A673 (cell line): ENCODE measurements at regions of chr1 and their contacts with region 1.

Region 1: GRCh38 chr1:39258146-39258924 is 53.8 kb downstream of the MACF1 start:
- DNase-seq: peak; percentile 79
- H3K4me3 ChIP-seq: no peak overlapping the region
- H3K27ac ChIP-seq: no peak overlapping the region
- H3K4me1 ChIP-seq: peaks cover 18% of the 10 kb centered on the region
- H3K27me3 ChIP-seq: no peaks in the 10 kb centered on the region
- CTCF ChIP-seq: peak; percentile 80

Region 2: GRCh38 chr1:39091845-39092645 is 166.3 kb before region 1 on chr1:
- CTCF ChIA-PET with region 1: no interaction called
- POLR2A ChIA-PET with region 1: no interaction called
- intact Hi-C with region 1: no loop called
- DNase-seq: no peak
- H3K4me3 ChIP-seq: no peak overlapping the region
- H3K27ac ChIP-seq: no peak overlapping the region
- H3K4me1 ChIP-seq: peaks cover 4% of the 10 kb centered on the region
- H3K27me3 ChIP-seq: no peaks in the 10 kb centered on the region
- CTCF ChIP-seq: no peak

Region 3: DNA sequence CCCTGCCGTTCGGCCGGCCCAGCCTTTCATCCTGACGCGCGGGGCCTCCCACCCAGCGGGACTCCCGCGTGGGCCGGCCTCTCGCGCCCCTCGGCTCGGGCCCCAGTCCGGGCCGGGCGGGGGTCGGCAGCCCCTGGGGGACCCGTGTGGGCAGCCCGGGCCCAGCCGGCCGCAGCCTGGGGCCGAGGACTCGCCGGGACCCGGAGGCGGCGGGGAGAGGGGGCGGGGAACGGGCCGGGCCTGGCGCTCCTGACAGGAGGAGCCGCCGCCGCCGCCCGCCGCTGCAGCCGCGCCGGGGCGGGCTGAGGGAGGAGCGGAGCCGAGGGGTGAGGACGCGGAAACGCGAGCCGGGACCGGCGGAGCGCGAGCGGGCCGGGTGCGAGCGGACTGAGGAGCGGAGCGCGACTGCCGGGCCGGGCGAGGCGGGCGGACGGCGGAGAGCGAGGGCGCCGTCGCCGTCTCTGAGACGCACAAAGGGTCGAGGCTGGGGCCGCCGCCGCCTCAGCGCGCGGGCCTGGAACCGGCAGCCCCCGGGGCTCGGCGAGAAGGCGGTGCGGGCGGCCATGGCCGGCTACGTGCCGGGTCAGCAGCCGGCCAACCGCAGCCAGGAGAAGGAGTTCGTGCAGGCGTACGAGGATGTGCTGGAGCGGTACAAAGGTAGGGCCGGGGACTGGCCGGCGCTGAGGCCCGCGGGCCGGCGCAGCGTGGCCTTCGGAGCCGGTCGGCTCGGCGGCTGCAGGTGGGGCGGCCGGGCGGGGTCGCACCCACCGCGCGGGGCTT is 153.1 kb before region 1 on chr1:
- CTCF ChIA-PET with region 1: interaction called, 9 read pairs
- POLR2A ChIA-PET with region 1: interaction called, 10 read pairs
- intact Hi-C with region 1: loop called (anchors 1 kb)
- DNase-seq: peak; percentile 77
- H3K4me3 ChIP-seq: peak overlapping the region; percentile 82
- H3K27ac ChIP-seq: peak overlapping the region; percentile 88
- H3K4me1 ChIP-seq: peaks cover 58% of the 10 kb centered on the region
- H3K27me3 ChIP-seq: no peaks in the 10 kb centered on the region
- CTCF ChIP-seq: no peak

Region 4: DNA sequence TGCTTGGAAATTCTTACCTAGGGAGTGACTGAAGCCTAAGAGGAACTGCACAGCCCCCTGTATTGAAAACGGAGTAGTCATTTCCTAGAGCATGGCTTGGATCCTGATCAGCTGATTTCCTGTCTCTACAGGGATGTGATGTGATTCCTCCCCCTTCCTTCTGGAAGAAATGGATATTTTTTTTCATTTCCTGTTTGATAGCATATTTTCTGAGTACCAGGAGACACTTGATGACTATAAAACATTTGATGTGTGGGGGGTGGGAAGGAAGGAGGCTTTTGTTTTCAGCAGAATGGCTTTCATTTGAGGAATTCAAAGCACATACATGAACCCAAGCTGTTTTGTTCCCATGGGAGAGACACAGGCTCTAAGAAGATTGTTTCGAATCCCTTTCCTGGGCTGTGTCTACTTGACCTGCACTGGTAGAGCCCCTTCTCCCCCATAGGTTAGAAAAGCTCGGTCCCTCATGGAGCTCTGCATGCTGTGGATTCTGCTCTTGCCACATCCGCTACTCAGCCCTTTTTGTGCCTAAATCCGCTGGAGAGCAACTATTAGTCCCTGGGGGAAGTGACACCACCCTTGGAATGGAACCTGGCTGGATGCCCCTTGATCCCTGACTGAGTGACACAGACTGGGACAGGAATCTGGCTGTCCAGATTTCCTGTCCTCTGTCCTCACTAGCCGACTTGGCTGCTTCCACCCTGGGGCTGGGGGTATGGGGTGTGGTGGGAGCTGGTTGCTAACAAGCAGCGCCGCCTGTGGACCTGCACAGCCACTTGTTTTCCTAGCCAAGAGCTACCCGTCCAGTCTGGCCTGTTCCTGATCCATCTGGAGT is 125.6 kb before region 1 on chr1:
- CTCF ChIA-PET with region 1: interaction called, 14 read pairs
- POLR2A ChIA-PET with region 1: no interaction called
- intact Hi-C with region 1: no loop called
- DNase-seq: peak; percentile 93
- H3K4me3 ChIP-seq: peak overlapping the region; percentile 20
- H3K27ac ChIP-seq: peak overlapping the region; percentile 87
- H3K4me1 ChIP-seq: peaks cover 54% of the 10 kb centered on the region
- H3K27me3 ChIP-seq: no peaks in the 10 kb centered on the region
- CTCF ChIP-seq: peak; percentile 51

Region 5: DNA sequence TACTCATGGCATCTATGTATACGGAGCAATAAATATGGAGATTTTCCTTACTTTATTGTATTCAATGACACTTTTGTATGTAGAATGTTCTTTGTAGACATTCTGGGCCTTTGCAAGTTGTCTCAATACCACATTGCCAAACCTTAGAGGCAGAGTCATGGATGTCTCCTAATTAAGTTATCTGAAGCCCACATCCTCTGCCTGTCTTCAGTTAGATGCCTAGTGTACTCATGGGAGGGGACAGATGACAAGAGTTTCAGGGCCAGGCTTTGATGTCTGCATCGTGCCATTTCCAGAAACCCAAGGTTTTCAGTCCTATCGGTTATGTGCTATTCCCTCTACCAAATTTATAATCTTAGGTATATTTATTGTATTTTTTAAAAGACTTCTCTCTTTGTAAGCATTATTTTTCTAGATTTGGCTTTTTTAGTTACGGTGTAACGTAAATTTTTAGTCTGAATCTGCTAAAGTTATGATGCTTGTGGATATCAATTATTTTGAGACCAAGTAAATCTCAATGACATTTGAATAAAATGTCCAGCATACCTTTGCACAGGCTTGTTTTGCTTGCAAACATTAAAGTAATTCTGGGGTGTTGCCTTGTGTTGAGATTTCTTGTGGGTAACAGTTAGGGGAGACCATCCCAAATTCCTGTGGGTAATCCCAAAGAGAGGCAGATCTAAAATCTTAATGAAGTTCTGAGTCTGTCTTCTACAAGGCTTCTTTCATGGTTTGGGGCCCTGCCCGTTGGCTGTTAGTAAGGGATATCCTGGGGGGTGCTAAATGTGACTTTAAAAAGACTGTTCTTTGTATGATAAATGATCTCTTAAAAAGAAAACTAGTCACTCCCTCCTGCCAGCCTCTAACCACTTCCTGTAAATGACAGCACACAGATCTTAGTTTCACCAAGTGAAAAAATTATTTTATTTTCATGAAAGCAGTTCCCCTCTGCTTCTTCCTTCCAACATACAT is 61.8 kb before region 1 on chr1:
- CTCF ChIA-PET with region 1: interaction called, 35 read pairs
- POLR2A ChIA-PET with region 1: no interaction called
- intact Hi-C with region 1: loop called (anchors 2 kb)
- DNase-seq: peak; percentile 82
- H3K4me3 ChIP-seq: no peak overlapping the region
- H3K27ac ChIP-seq: peak overlapping the region; percentile 36
- H3K4me1 ChIP-seq: peaks cover 55% of the 10 kb centered on the region
- H3K27me3 ChIP-seq: no peaks in the 10 kb centered on the region
- CTCF ChIP-seq: no peak